ENCODE measurements at regions of chrX and their contacts with region 1.

Region 1: DNA sequence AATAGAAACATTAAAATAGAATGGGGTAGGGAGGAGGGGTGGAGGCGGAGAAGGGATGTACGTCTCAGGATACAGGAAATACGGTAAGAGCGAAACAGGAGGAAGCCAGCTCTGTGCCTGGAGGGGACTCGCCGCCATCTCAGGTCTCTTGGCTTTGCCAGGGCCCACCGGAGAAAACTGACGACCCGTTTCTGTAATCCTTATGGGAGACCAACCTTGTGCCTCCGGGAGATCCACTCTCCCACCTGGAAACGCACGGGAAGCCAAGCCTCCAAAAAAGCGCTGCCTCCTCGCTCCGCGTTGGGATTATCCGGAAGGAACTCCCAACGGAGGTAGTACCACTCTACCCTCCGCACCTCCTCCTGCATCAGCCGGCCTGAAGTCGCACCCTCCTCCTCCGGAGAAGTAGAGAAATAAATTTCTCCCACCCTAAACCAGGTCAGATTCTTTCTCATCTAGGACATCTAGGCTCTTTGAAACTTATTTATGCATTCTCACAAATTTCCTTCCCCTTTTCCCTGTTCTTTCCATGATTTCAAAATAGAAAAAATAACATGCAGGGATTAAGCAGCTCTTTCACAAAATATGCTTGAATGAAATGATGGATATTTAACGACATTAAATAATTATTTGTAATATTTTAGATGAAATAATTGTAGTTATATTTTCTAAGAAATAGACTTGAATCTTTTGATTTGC is at the start of gene NBDY:
- DNase-seq: peak; percentile 36 to 62 (median 48)
- H3K4me3 ChIP-seq: peak within 1 kb of the TSS; percentile 36 to 76
- H3K4me3 Mint-ChIP-seq: peak within 1 kb of the TSS; percentile 92 to 97 (median 94)
- H3K27ac ChIP-seq: peak within 1 kb of the TSS; percentile 78
- H3K27ac Mint-ChIP-seq: peak within 1 kb of the TSS; percentile 88 to 97 (median 95)
- H3K4me1 ChIP-seq: peaks cover 28% of the 10 kb centered on the region
- H3K4me1 Mint-ChIP-seq: peaks cover 13 to 51% (median 17%) of the 10 kb centered on the region in 4 donors
- H3K27me3 ChIP-seq: no peaks in the 10 kb centered on the region
- H3K27me3 Mint-ChIP-seq: no peaks in the 10 kb centered on the region
- total RNA-seq, gene NBDY: 29.3 to 34.3 TPM

Region 2: GRCh38 chrX:56248492-56248891 is 480.8 kb before region 1 on chrX:
- CTCF ChIA-PET with region 1: interaction called, 8 read pairs
- POLR2A ChIA-PET with region 1: no interaction called
- intact Hi-C with region 1: loop called (anchors 1 kb)
- DNase-seq: peak; percentile 35 to 56 (median 49)
- H3K4me3 ChIP-seq: no peak overlapping the region
- H3K4me3 Mint-ChIP-seq: no peak overlapping the region
- H3K27ac ChIP-seq: no peak overlapping the region
- H3K27ac Mint-ChIP-seq: peak overlapping the region in 1 of 7 donors; percentile 29
- H3K4me1 ChIP-seq: no peaks in the 10 kb centered on the region
- H3K4me1 Mint-ChIP-seq: peaks cover 5 to 10% (median 6%) of the 10 kb centered on the region in 4 donors
- H3K27me3 ChIP-seq: no peaks in the 10 kb centered on the region
- H3K27me3 Mint-ChIP-seq: no peaks in the 10 kb centered on the region

Region 3: GRCh38 chrX:56281789-56282188 is 447.5 kb before region 1 on chrX:
- CTCF ChIA-PET with region 1: interaction called, 181 read pairs
- POLR2A ChIA-PET with region 1: interaction called, 8 read pairs
- intact Hi-C with region 1: loop called (anchors 1 kb)
- DNase-seq: peak; percentile 32 to 54 (median 42)
- H3K4me3 ChIP-seq: no peak overlapping the region
- H3K4me3 Mint-ChIP-seq: no peak overlapping the region
- H3K27ac ChIP-seq: no peak overlapping the region
- H3K27ac Mint-ChIP-seq: no peak overlapping the region
- H3K4me1 ChIP-seq: peaks cover 7% of the 10 kb centered on the region
- H3K4me1 Mint-ChIP-seq: peaks cover 7 to 9% (median 8%) of the 10 kb centered on the region in 4 donors
- H3K27me3 ChIP-seq: no peaks in the 10 kb centered on the region
- H3K27me3 Mint-ChIP-seq: no peaks in the 10 kb centered on the region

Region 4: GRCh38 chrX:56563231-56564161 is 165.8 kb before region 1 on chrX and contains the start of gene UBQLN2:
- CTCF ChIA-PET with region 1: interaction called, 16 read pairs
- POLR2A ChIA-PET with region 1: interaction called, 6 read pairs
- intact Hi-C with region 1: loop called (anchors 1 kb)
- DNase-seq: peak; percentile 76 to 81 (median 79)
- H3K4me3 ChIP-seq: peak within 1 kb of the TSS; percentile 74 to 84
- H3K4me3 Mint-ChIP-seq: peak within 1 kb of the TSS; percentile 88 to 97 (median 90)
- H3K27ac ChIP-seq: peak within 1 kb of the TSS; percentile 94
- H3K27ac Mint-ChIP-seq: peak within 1 kb of the TSS; percentile 93 to 99 (median 98)
- H3K4me1 ChIP-seq: peaks cover 19% of the 10 kb centered on the region
- H3K4me1 Mint-ChIP-seq: peaks cover 6 to 32% (median 12%) of the 10 kb centered on the region in 4 donors
- H3K27me3 ChIP-seq: no peaks in the 10 kb centered on the region
- H3K27me3 Mint-ChIP-seq: no peaks in the 10 kb centered on the region
- total RNA-seq, gene UBQLN2: 62.6 to 64.0 TPM

Region 5: GRCh38 chrX:56764153-56764974 is 35.1 kb after region 1 on chrX:
- CTCF ChIA-PET with region 1: interaction called, 9 read pairs
- POLR2A ChIA-PET with region 1: interaction called, 3 read pairs
- intact Hi-C with region 1: loop called (anchors 1 kb)
- DNase-seq: peak; percentile 76 to 93 (median 91)
- H3K4me3 ChIP-seq: peak overlapping the region in 1 of 2 donors; percentile 35
- H3K4me3 Mint-ChIP-seq: peak overlapping the region; percentile 81 to 95 (median 92)
- H3K27ac ChIP-seq: peak overlapping the region; percentile 67
- H3K27ac Mint-ChIP-seq: peak overlapping the region; percentile 85 to 97 (median 93)
- H3K4me1 ChIP-seq: peaks cover 48% of the 10 kb centered on the region
- H3K4me1 Mint-ChIP-seq: peaks cover 40 to 60% (median 48%) of the 10 kb centered on the region in 4 donors
- H3K27me3 ChIP-seq: no peaks in the 10 kb centered on the region
- H3K27me3 Mint-ChIP-seq: no peaks in the 10 kb centered on the region

Region 6: DNA sequence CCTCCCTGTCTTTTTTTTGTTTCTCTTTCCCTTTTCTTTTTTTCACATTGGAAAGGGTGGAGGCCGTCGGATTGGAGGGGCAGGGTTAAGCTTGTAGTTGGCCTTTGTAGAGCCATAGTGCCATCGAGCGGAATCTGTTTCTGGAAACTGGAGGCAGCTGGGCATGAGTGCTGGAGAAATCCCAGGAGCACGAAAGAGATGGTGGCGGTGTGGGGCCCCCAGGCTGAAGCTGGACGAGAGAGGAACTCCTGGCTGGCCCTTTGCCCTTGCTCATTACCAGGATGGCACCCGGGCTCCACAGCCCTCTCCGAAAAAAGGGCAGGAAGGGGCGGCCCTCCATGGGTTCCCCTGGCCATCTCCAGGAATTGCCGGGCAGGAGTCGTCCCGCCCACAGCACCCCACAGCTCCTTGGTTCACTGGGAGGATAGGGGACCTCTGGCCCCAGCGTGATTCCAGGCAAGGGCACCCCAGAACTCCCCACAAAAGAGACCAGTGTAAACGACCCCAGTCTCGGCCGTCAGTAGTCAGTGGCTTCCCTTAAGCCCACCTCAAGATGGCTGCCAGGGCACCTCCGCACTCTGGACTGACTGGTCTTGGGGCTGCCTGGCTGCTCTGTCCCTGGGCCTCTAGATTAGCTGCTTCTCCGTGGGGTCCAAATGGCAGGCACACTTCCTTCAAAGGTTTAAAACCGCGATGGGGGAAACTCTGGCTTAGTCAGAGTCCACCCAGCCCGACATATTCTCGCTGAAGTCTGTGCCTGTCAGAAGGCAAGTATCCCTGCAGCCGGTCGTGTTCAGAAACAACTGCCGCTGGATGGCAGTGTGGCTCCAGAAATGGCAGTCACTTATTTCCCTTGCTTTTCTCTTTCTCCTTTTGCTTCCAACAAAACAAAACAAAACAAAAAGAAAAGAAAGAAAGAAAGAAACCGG is 73.9 kb after region 1 on chrX:
- CTCF ChIA-PET with region 1: no interaction called
- POLR2A ChIA-PET with region 1: no interaction called
- intact Hi-C with region 1: loop called (anchors 2 kb)
- DNase-seq: peak; percentile 46 to 79 (median 77)
- H3K4me3 ChIP-seq: no peak overlapping the region
- H3K4me3 Mint-ChIP-seq: peak overlapping the region; percentile 46 to 98 (median 96)
- H3K27ac ChIP-seq: no peak overlapping the region
- H3K27ac Mint-ChIP-seq: peak overlapping the region; percentile 63 to 94 (median 88)
- H3K4me1 ChIP-seq: peaks cover 43% of the 10 kb centered on the region
- H3K4me1 Mint-ChIP-seq: peaks cover 24 to 50% (median 33%) of the 10 kb centered on the region in 4 donors
- H3K27me3 ChIP-seq: no peaks in the 10 kb centered on the region
- H3K27me3 Mint-ChIP-seq: no peaks in the 10 kb centered on the region

Region 7: GRCh38 chrX:56978172-56978571 is 248.9 kb after region 1 on chrX:
- CTCF ChIA-PET with region 1: interaction called, 8 read pairs
- POLR2A ChIA-PET with region 1: interaction called, 3 read pairs
- intact Hi-C with region 1: loop called (anchors 1 kb)
- DNase-seq: peak; percentile 51 to 60 (median 59)
- H3K4me3 ChIP-seq: no peak overlapping the region
- H3K4me3 Mint-ChIP-seq: no peak overlapping the region
- H3K27ac ChIP-seq: no peak overlapping the region
- H3K27ac Mint-ChIP-seq: peak overlapping the region in 3 of 7 donors; percentile 16 to 67 (median 51)
- H3K4me1 ChIP-seq: no peaks in the 10 kb centered on the region
- H3K4me1 Mint-ChIP-seq: peaks cover 0 to 4% (median 1%) of the 10 kb centered on the region in 4 donors
- H3K27me3 ChIP-seq: no peaks in the 10 kb centered on the region
- H3K27me3 Mint-ChIP-seq: no peaks in the 10 kb centered on the region